Dorsolateral prefrontal cortex (tissue), 120 donors: ENCODE measurements at regions of chr1 and their contacts with region 1.

Region 1: DNA sequence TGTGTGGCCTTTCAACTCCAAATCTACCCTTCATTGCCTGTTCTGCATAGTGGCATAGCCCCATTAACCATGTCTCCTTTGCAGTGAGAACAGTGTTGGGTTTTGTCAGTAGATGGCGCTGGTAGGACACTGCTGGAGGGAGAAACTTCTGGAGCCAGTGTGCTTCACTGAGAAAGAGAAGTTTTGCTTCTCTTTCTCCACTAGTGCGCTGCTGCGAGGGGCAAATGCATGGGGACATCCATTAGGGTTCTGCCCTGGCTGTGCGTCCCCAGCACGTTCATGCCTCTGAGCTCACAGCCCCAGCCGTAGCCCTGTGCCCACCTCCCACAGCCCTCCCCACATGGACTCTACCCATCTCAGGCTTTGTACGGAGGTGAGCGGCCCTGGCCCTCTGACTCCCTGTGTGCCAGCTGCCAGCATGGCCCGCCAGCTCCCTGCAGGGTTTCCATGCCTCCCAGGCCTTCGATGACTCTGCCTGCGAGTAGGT is 53.1 kb downstream of the RIMS3 start:
- DNase-seq: peak in 7 of 10 donors; percentile 54 to 76 (median 64)
- H3K4me3 ChIP-seq: peak overlapping the region in 5 of 59 donors; percentile 8 to 31 (median 21)
- H3K27ac ChIP-seq: peak overlapping the region in 18 of 59 donors; percentile 4 to 77 (median 44)
- H3K27me3 ChIP-seq: no peaks in the 10 kb centered on the region
- CTCF ChIP-seq: peak; percentile 46 to 92 (median 84)

Region 2: DNA sequence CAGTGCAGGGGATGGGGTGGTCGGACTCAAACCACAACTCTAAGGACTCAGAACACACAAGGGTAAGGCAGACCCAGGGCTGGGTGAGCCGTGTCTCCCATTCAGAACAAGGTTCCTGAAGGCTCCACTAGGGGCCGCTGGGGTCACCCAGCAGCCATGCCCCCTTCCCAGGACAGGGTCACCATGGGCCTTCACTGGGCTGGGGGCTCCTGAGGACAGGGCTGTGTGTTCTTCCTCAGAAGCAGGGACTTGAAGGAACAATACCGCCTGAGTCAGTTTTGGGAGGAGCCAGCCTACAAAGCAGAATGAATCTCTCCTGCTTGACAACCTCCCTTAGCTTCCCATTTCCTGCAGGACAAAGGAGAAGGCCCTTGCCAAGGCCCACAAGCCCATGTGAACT is 37.7 kb after region 1 on chr1:
- intact Hi-C with region 1: no loop called
- DNase-seq: no peak
- H3K4me3 ChIP-seq: peak overlapping the region in 19 of 59 donors; percentile 3 to 53 (median 27)
- H3K27ac ChIP-seq: peak overlapping the region in 54 of 59 donors; percentile 28 to 91 (median 76)
- H3K27me3 ChIP-seq: no peaks in the 10 kb centered on the region
- CTCF ChIP-seq: peak in 14 of 56 donors; percentile 7 to 28 (median 15)

Region 3: GRCh38 chr1:40668769-40669525 is 56.6 kb after region 1 on chr1:
- intact Hi-C with region 1: loop called in 1 of 2 experiments (anchors 5 kb)
- DNase-seq: peak; percentile 65 to 96 (median 81)
- H3K4me3 ChIP-seq: peak overlapping the region in 56 of 59 donors; percentile 2 to 62 (median 40)
- H3K27ac ChIP-seq: peak overlapping the region in 8 of 59 donors; percentile 5 to 74 (median 32)
- H3K27me3 ChIP-seq: no peaks in the 10 kb centered on the region
- CTCF ChIP-seq: peak; percentile 83 to 99 (median 95)

Region 4: DNA sequence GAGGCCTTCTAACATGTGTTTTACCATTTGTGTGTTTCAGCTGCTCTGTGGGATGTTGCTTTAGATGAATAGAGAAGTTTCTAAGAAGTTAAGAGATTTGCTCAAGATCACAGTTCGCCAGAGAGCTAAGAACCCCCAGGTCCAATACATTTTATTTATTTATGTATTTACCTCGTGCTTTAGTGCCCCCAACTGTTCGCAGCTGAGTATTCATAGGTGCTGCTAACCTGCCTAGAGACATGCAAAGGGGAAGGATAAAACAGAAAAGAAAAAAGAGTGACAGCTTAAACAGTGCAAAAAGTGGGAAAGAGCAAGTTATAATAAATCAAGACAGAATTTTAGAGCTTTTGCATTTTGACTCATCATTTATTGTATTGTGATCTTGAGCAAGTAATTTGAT is 110.2 kb after region 1 on chr1:
- intact Hi-C with region 1: no loop called
- DNase-seq: no peak
- H3K4me3 ChIP-seq: no peak overlapping the region
- H3K27ac ChIP-seq: no peak overlapping the region
- H3K27me3 ChIP-seq: no peaks in the 10 kb centered on the region
- CTCF ChIP-seq: peak in 1 of 56 donors; percentile 22

Region 5: GRCh38 chr1:40774266-40774998 is 162.0 kb after region 1 on chr1:
- intact Hi-C with region 1: loop called in 1 of 2 experiments (anchors 10 kb)
- DNase-seq: peak in 4 of 10 donors; percentile 38 to 51 (median 45)
- H3K4me3 ChIP-seq: no peak overlapping the region
- H3K27ac ChIP-seq: no peak overlapping the region
- H3K27me3 ChIP-seq: no peaks in the 10 kb centered on the region
- CTCF ChIP-seq: peak; percentile 39 to 83 (median 72)

Region 6: GRCh38 chr1:40825996-40826395 is 213.6 kb after region 1 on chr1:
- intact Hi-C with region 1: no loop called
- DNase-seq: no peak
- H3K4me3 ChIP-seq: no peak overlapping the region
- H3K27ac ChIP-seq: no peak overlapping the region
- H3K27me3 ChIP-seq: no peaks in the 10 kb centered on the region
- CTCF ChIP-seq: no peak